ENCODE measurements at regions of chr18 and their contacts with region 1.

Region 1: GRCh38 chr18:220708-221107 is 47.1 kb downstream of the THOC1 start:
- DNase-seq: no peak
- ATAC-seq: no peak
- H3K4me3 Mint-ChIP-seq: no peak overlapping the region
- H3K27ac Mint-ChIP-seq: peak overlapping the region; percentile 11
- H3K4me1 Mint-ChIP-seq: no peaks in the 10 kb centered on the region
- H3K27me3 Mint-ChIP-seq: no peaks in the 10 kb centered on the region
- CTCF ChIP-seq: no peak

Region 2: DNA sequence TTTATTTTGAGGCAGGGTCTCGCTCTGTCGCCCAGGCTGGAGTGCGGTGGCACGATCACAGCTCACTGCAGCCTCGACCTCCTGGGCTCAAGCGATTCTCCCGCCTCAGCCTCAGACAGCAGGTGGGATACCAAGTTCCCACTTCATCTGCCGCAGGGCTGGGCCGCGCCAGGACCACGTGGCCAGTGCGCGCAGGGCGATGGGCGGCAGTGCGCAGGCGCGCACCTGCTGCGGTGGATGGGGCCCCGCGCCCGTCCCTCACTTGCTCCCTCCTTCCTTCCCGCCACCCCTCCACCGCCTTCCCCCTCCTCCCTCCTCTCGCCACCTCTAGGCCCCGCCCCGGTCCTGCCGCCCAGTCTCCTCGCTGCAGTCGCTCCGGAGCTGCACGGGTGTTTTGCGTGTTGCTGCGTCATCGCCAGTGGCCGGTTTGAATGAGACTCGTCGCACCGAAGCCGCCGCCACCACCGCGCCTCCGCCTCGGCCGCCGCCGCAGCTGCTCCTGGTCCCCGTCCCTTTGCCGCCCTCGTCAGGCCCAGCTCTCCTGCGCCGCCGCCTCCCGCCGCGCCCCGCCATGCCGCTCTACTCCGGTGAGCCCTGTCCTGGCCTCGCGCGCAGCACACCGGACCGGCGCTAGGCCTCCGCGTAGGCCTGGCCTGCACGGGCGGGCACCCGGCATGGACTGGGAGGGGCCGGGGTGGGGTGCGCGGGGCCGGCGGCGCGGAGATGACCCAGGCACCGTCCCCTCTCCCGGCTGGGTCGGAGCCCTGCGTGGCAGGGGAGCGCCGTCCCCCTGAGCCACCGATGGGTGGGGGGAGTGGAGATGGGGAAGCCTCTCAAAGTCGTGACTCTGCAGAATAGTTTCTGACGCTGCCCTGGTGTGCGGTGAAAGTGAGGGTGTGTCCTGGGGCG is 62.3 kb before region 1 on chr18 and contains the start of gene USP14:
- CTCF ChIA-PET with region 1: no interaction called
- POLR2A ChIA-PET with region 1: no interaction called
- intact Hi-C with region 1: loop called (anchors 2 kb)
- DNase-seq: peak; percentile 98
- ATAC-seq: peak; percentile 98
- H3K4me3 Mint-ChIP-seq: peak within 1 kb of the TSS; percentile 92
- H3K27ac Mint-ChIP-seq: peak within 1 kb of the TSS; percentile 95
- H3K4me1 Mint-ChIP-seq: peaks cover 24% of the 10 kb centered on the region
- H3K27me3 Mint-ChIP-seq: no peaks in the 10 kb centered on the region
- CTCF ChIP-seq: no peak
- total RNA-seq, gene USP14: 94.6 to 96.2 TPM

Measured in activated CD8-positive, alpha-beta T cell treated with anti-CD3 and anti-CD28 coated beads for 36 hours (primary cell).